Sciatic nerve (tissue), 2 donors: ENCODE measurements at regions of chr1 and their contacts with region 1.

Region 1: DNA sequence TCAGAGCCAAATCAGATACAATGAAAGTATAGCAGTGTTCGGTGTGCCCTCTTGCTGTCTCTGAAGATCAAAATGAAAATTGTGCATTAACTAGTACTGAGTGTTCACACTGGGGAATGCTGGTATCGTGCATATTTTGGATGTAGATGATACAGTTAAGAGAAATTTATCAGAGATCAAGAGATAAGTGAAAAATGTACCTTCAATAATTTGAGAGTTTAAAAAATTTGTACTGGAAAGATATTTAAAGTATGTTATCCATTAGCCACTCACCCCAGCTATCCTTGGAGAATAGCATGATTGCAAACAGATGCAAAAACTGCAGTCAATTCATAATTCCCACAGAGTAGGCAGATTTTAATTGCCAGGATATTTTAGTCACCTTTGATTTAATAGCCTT is 56.4 kb downstream of the GREM2 start:
- DNase-seq: no peak
- ATAC-seq: no peak

Region 2: DNA sequence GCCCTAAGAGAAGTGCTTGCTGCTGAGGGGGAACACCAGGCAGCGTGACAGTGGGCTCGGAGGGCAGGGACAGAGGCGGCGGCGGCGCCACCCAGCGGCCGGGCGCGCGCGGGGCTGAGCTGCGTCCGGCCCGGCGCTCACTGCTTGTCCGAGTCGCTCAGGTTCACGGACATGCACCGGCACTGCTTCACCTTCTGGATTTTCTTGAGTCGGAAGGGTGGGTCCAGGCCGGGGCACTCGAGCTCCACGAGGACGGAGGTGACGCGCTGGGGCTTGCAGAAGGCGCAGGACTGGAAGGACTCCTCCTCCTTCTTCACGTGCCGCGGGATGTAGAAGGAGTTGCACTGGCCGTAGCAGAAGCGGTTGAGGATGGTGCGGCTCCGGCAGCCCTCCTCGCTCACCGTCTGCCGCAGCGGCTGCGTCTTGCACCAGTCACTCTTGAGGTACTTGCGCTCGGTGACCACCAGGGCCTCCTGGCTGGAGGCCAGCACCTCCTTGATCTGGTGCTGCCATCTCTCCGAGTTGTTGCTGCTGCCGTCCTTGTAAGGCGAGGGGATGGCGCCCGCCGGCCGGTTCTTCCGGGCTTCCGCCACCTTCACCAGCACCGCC is 62.6 kb before region 1 on chr1:
- intact Hi-C with region 1: no loop called
- DNase-seq: no peak
- ATAC-seq: no peak

Region 3: GRCh38 chr1:240611619-240612480 is 56.3 kb after region 1 on chr1 and contains the start of gene GREM2:
- intact Hi-C with region 1: no loop called
- DNase-seq: peak; percentile 65
- ATAC-seq: peak; percentile 89
- total RNA-seq, gene GREM2: 1.0 TPM

Region 4: DNA sequence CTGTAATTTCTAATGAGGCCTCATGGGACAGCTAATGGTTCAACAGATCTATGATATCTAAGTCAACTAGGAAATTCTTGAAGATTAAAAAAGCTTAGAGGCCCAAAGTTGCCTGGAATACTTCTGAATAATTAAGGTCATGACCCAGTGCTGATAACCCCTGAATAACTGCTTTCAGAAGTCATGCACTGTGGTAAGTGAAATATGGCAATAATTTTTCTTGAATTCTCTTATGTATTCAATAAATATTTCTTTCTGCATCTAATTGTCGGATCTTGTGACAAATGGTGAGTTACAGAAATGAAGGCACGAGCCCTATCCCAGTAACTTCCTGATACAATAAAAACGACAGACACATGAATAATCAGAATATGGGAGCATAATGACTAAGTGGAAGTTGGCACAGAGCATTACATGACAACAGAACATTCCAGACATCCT is 275.7 kb after region 1 on chr1:
- intact Hi-C with region 1: no loop called
- DNase-seq: no peak
- ATAC-seq: no peak

Region 5: DNA sequence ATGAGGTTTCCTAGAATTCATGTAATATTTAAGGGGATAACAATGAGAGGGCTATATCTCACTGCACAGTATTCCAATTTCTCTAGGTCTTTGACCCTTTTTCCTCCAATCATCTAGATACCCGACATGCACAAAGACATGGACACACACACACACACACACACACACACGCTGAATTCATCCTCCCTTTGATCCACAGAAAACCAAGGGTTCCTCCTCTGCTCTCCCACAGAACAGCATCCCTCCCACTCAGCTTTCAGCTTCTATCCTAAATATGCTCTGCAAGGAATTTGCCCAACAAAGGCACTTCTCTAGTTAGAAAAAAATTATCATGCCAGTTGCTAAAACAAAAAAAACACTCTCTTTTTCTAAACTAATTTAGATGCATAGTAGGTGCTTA is 569.8 kb after region 1 on chr1:
- intact Hi-C with region 1: loop called (anchors 10 kb)
- DNase-seq: no peak
- ATAC-seq: no peak